Prostate gland (tissue), 2 donors: ENCODE measurements at regions of chr14 and their contacts with region 1.

Region 1: GRCh38 chr14:74762917-74763802 is at the start of gene YLPM1:
- DNase-seq: peak; percentile 90
- H3K4me3 ChIP-seq: peak within 1 kb of the TSS; percentile 95 to 100
- H3K27ac ChIP-seq: peak within 1 kb of the TSS; percentile 84 to 88
- H3K4me1 ChIP-seq: no peaks in the 10 kb centered on the region
- H3K27me3 ChIP-seq: no peaks in the 10 kb centered on the region
- CTCF ChIP-seq: peak in 3 of 4 experiments; percentile 67 to 82 (median 77)
- POLR2A ChIP-seq: peak; percentile 69
- total RNA-seq, gene YLPM1: 39.0 to 71.9 TPM

Region 2: GRCh38 chr14:74697543-74697942 is 65.6 kb before region 1 on chr14:
- intact Hi-C with region 1: no loop called
- DNase-seq: no peak
- H3K4me3 ChIP-seq: no peak overlapping the region
- H3K27ac ChIP-seq: no peak overlapping the region
- H3K4me1 ChIP-seq: no peaks in the 10 kb centered on the region
- H3K27me3 ChIP-seq: no peaks in the 10 kb centered on the region
- CTCF ChIP-seq: no peak
- POLR2A ChIP-seq: no peak

Region 3: GRCh38 chr14:74712499-74713394 is 50.4 kb before region 1 on chr14 and contains the starts of genes AREL1 and FCF1:
- intact Hi-C with region 1: loop called (anchors 10 kb)
- DNase-seq: peak; percentile 83
- H3K4me3 ChIP-seq: peak within 1 kb of the TSS; percentile 53 to 72
- H3K27ac ChIP-seq: peak within 1 kb of the TSS; percentile 78 to 81
- H3K4me1 ChIP-seq: peaks cover 4% of the 10 kb centered on the region
- H3K27me3 ChIP-seq: no peaks in the 10 kb centered on the region
- CTCF ChIP-seq: peak in 2 of 4 experiments; percentile 14 to 16
- POLR2A ChIP-seq: peak; percentile 13
- total RNA-seq, gene AREL1: 14.8 to 51.2 TPM
- total RNA-seq, gene FCF1: 24.2 to 26.0 TPM